Activated CD8-positive, alpha-beta T cell treated with anti-CD3 and anti-CD28 coated beads for 36 hours (primary cell): ENCODE measurements at regions of chr10 and their contacts with region 1.

Region 1: DNA sequence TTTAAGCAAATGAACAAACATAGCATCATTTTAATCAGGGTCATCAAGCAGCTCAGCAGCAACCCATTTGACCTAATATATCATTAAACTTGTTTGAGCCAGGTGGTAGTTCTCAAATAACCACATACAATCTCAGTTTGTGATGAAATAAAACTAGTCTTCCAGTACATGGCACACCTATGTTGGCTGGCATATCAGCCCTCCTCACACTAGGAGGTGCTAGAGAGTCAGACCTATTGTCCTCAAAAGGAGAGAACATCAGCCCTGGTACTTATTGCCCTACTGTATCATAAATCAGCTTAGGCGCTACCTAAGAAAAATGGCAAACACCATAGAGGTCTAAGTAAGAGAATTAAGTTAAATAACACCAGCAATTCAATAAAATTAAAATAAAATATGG is 81.7 kb downstream of the CABCOCO1 start:
- DNase-seq: peak; percentile 40
- ATAC-seq: peak; percentile 66
- H3K4me3 Mint-ChIP-seq: no peak overlapping the region
- H3K27ac Mint-ChIP-seq: no peak overlapping the region
- H3K4me1 Mint-ChIP-seq: no peaks in the 10 kb centered on the region
- H3K27me3 Mint-ChIP-seq: peaks cover 2% of the 10 kb centered on the region
- CTCF ChIP-seq: peak; percentile 32

Region 2: DNA sequence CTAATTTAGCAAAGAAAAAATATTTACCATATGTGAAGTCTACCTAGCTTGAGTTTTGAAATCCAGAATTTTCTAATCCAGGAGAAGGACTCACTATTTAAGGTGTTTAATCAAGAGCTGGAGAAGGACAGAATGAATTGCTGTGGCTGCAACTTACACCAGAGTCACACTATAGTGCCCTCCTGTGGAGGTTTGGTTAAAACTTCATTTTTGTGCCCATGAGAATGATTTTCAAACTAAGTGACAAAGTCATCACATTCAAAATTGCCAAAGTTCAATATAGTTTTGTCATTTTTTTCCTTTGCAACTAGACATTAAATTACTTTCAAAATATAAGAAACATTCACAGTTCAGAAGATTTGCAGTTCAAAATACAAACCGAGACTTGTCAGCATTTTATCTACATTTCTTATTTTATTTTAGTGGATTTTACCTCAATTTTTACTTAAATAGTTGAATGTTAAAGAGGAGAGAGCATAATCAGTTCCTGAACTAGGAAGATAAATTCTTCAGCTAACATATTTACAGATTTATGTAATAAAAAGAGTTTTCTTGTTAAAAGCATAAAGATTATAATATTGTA is 11.0 kb before region 1 on chr10:
- CTCF ChIA-PET with region 1: interaction called, 10 read pairs
- POLR2A ChIA-PET with region 1: no interaction called
- intact Hi-C with region 1: no loop called
- DNase-seq: peak; percentile 26
- ATAC-seq: no peak
- H3K4me3 Mint-ChIP-seq: no peak overlapping the region
- H3K27ac Mint-ChIP-seq: no peak overlapping the region
- H3K4me1 Mint-ChIP-seq: no peaks in the 10 kb centered on the region
- H3K27me3 Mint-ChIP-seq: peaks cover 28% of the 10 kb centered on the region
- CTCF ChIP-seq: peak; percentile 66

Region 3: GRCh38 chr10:61786728-61787127 is 42.3 kb after region 1 on chr10:
- CTCF ChIA-PET with region 1: no interaction called
- POLR2A ChIA-PET with region 1: no interaction called
- intact Hi-C with region 1: no loop called
- DNase-seq: peak; percentile 53
- ATAC-seq: peak; percentile 31
- H3K4me3 Mint-ChIP-seq: no peak overlapping the region
- H3K27ac Mint-ChIP-seq: no peak overlapping the region
- H3K4me1 Mint-ChIP-seq: peaks cover 48% of the 10 kb centered on the region
- H3K27me3 Mint-ChIP-seq: no peaks in the 10 kb centered on the region
- CTCF ChIP-seq: no peak